ENCODE measurements at regions of chr3 and their contacts with region 1.

Region 1: GRCh38 chr3:187319699-187320302 is 28.3 kb upstream of the MASP1 start:
- DNase-seq: peak; percentile 75
- ATAC-seq: peak; percentile 91 to 97

Region 2: DNA sequence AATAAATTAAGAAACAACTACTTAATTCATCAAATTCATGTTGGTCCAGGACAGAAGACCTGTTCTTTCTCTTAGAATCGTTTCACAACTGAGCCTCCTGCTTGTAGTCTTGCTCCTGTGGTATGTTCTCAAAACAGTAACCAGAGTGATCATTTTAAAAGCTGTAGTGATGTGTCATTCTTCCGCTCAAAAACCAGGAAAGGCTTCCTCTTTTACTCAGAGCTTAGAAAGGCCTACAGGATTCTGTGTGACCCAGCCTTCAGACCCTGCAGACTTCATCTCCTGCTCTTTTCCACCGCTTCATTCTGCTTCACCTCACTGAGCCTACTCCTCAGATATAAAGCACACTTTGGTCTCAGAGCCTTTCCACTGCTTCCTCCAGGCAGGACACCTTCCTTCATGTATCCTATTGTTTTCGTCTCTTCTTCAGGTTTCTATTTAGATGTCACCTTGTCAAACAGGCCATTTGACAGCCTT is 366.8 kb before region 1 on chr3:
- intact Hi-C with region 1: no loop called
- DNase-seq: no peak
- ATAC-seq: peak in 1 of 2 donors; percentile 9

Region 3: GRCh38 chr3:187085933-187086332 is 233.9 kb before region 1 on chr3:
- intact Hi-C with region 1: no loop called
- DNase-seq: no peak
- ATAC-seq: no peak

Region 4: DNA sequence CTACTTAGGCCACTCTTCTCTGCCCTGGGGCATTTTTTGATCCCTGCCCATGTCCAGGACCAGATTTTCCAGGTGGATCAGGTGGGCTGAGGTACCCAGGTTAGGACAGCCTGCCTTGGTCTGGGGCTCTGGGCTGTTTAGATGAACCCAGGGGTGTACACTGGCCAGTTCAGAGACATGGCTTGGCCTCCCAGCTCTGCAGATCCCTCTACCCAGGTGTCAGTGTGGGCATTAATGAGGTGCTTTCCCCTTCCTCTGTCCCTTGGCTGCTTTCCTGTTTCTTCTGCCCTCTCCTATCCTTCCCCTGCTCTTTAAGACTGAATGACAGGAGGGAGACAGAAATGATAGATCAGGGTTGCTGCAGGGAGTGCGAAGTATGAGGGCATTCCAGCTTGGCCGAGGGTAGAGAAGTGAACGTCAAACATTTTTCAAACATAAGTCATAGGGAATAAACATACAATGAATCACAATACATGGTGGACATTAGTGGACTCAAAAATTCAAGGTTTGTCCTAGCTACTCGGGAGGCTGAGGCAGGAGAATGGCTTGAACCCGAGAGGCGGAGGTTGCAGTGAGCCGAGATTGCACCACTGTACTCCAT is 92.0 kb before region 1 on chr3:
- intact Hi-C with region 1: loop called in 1 of 2 experiments (anchors 5 kb)
- DNase-seq: no peak
- ATAC-seq: peak in 1 of 2 donors; percentile 71

Region 5: DNA sequence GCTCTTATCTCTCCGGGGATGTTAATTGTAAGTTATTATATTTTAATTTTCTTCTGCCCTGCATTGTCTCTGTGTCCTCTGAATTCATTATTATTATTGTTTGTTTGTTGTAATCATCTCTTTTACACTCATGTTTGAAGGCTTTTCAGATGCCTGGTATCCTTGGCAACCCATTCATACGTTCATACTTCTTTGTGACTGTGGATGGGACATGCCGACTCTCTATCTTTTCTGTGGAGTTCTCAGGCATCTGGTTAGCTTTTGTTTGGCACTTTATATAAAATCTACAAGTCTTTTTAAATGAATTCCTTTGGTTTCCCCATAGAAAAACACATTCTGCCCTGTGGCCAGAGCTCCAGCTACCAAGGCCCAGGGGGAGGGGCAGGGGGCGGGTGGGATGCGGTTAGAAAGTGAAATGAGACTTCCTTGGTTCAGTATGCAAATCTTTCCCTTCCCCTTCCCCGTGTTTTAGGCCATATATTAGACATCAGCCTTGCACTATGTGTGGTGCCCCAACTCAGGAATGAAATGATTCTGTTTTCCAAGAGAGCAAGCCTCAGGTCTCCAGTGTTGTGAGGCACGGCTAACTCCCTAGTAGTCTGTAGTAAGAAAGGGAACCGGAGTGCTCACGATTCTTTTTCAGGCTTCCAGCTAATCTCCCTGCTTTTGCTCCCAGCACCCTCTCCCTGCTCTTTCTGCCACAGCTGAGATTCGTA is 271.2 kb after region 1 on chr3:
- intact Hi-C with region 1: no loop called
- DNase-seq: no peak
- ATAC-seq: no peak

Region 6: GRCh38 chr3:187714404-187714979 is 394.7 kb after region 1 on chr3:
- intact Hi-C with region 1: loop called in 1 of 2 experiments (anchors 1 kb)
- DNase-seq: peak; percentile 58
- ATAC-seq: peak; percentile 87 to 93